Aorta (tissue), 5 donors: ENCODE measurements at regions of chrX and their contacts with region 1.

Region 1: DNA sequence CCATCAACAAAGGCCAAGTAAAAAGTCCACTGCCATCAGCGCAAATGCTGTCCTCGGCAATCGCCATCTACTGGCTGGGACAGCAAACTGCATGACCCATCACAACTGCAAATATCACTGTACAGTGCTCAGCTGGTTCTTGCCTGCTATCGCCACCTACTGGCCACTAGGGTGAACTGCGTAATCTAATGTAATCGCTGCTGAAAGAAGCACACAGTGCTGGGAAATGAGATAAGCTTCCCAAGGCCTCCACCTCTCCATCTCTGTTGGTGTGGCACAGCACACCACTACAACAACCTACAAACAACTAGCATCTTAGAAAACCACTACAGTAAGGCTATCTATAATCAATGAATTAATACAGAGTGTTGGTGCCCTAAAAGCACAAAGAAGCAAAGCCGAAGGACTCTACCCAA is 298.3 kb downstream of the TEX13A start:
- DNase-seq: peak; percentile 71 to 80
- ATAC-seq: peak; percentile 92
- H3K4me3 ChIP-seq: no peak overlapping the region
- H3K27ac ChIP-seq: no peak overlapping the region
- H3K4me1 ChIP-seq: no peaks in the 10 kb centered on the region
- H3K27me3 ChIP-seq: no peaks in the 10 kb centered on the region

Region 2: GRCh38 chrX:104668550-104668949 is 253.7 kb before region 1 on chrX:
- intact Hi-C with region 1: loop called (anchors 5 kb)
- DNase-seq: no peak
- ATAC-seq: no peak
- H3K4me3 ChIP-seq: no peak overlapping the region
- H3K27ac ChIP-seq: no peak overlapping the region
- H3K4me1 ChIP-seq: no peaks in the 10 kb centered on the region
- H3K27me3 ChIP-seq: no peaks in the 10 kb centered on the region

Region 3: DNA sequence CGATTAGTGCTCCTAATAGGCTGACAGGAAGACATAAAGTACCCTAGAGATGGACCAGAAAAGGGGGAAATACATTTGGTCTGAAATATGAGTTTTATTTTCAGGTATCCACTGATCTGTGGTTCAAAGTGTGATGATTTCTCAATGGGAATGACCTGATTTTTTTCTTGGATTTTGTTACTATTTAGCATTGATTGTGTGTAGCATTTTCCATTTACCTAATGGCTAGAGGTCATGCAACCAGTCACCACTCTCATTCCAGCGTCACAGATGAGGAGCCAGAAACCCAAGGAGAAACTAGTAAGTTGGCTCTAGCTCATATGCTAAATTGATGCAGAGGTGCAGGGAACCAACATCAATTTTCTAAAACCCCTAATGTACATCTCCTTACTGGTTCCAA is 238.1 kb before region 1 on chrX:
- intact Hi-C with region 1: no loop called
- DNase-seq: no peak
- ATAC-seq: no peak
- H3K4me3 ChIP-seq: no peak overlapping the region
- H3K27ac ChIP-seq: no peak overlapping the region
- H3K4me1 ChIP-seq: no peaks in the 10 kb centered on the region
- H3K27me3 ChIP-seq: no peaks in the 10 kb centered on the region

Region 4: GRCh38 chrX:104742345-104742744 is 179.9 kb before region 1 on chrX:
- intact Hi-C with region 1: no loop called
- DNase-seq: no peak
- ATAC-seq: no peak
- H3K4me3 ChIP-seq: no peak overlapping the region
- H3K27ac ChIP-seq: no peak overlapping the region
- H3K4me1 ChIP-seq: peaks cover 0 to 2% of the 10 kb centered on the region in 2 donors
- H3K27me3 ChIP-seq: no peaks in the 10 kb centered on the region

Region 5: DNA sequence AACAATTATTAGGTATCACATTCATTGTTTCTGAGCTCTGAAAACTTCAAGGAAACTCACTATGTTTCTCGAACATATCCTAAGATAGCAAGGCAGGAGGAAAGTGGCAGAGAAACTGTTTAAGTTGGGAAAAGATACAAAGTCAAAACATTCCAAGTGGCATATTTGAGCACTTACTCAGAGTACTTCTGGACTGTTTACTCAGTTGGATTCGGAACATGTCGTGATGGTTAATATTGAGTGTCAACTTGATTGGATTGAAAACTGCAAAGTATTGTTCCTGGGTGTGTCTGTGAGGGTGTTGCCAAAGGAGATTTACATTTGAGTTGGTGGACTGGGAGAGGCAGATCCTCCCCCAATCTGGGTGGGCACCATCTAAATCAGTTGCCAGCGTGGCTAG is 57.9 kb before region 1 on chrX:
- intact Hi-C with region 1: no loop called
- DNase-seq: no peak
- ATAC-seq: no peak
- H3K4me3 ChIP-seq: no peak overlapping the region
- H3K27ac ChIP-seq: no peak overlapping the region
- H3K4me1 ChIP-seq: peaks cover 0 to 4% of the 10 kb centered on the region in 2 donors
- H3K27me3 ChIP-seq: no peaks in the 10 kb centered on the region